ENCODE measurements at regions of chr9 and their contacts with region 1.

Region 1: GRCh38 chr9:136133191-136133958 is 14.7 kb upstream of the TMEM250 start:
- DNase-seq: peak; percentile 93
- H3K4me3 ChIP-seq: peak overlapping the region; percentile 37 to 57
- H3K27ac ChIP-seq: no peak overlapping the region
- H3K4me1 ChIP-seq: peaks cover 4 to 15% of the 10 kb centered on the region in 2 experiments; a peak in 2 of 4 replicates
- H3K27me3 ChIP-seq: peaks cover 74% of the 10 kb centered on the region
- CTCF ChIP-seq: peak; percentile 53
- EP300 ChIP-seq: no peak
- RAD21 ChIP-seq: peak; percentile 63

Region 2: GRCh38 chr9:136267261-136268111 is 134.1 kb after region 1 on chr9:
- CTCF ChIA-PET with region 1: interaction called, 10 read pairs
- POLR2A ChIA-PET with region 1: no interaction called
- DNase-seq: peak; percentile 100
- H3K4me3 ChIP-seq: peak overlapping the region; percentile 50 to 52
- H3K27ac ChIP-seq: peak overlapping the region in 1 of 2 experiments; percentile 76; a peak in 2 of 4 replicates
- H3K4me1 ChIP-seq: peaks cover 0 to 15% of the 10 kb centered on the region in 2 experiments; a peak in 1 of 4 replicates
- H3K27me3 ChIP-seq: peaks cover 5% of the 10 kb centered on the region; the same call in 1 of the 2 replicates
- CTCF ChIP-seq: peak; percentile 28; the same call in 1 of the 2 replicates
- EP300 ChIP-seq: no peak
- RAD21 ChIP-seq: peak; percentile 49

Region 3: GRCh38 chr9:136328622-136329041 is 195.3 kb after region 1 on chr9:
- CTCF ChIA-PET with region 1: no interaction called
- POLR2A ChIA-PET with region 1: no interaction called
- DNase-seq: peak; percentile 72
- H3K4me3 ChIP-seq: peak overlapping the region; percentile 82 to 84
- H3K27ac ChIP-seq: peak overlapping the region; percentile 50 to 89; a peak in 3 of 4 replicates
- H3K4me1 ChIP-seq: peaks cover 24 to 49% of the 10 kb centered on the region in 2 experiments
- H3K27me3 ChIP-seq: no peaks in the 10 kb centered on the region
- CTCF ChIP-seq: no peak
- EP300 ChIP-seq: no peak
- RAD21 ChIP-seq: no peak

Region 4: DNA sequence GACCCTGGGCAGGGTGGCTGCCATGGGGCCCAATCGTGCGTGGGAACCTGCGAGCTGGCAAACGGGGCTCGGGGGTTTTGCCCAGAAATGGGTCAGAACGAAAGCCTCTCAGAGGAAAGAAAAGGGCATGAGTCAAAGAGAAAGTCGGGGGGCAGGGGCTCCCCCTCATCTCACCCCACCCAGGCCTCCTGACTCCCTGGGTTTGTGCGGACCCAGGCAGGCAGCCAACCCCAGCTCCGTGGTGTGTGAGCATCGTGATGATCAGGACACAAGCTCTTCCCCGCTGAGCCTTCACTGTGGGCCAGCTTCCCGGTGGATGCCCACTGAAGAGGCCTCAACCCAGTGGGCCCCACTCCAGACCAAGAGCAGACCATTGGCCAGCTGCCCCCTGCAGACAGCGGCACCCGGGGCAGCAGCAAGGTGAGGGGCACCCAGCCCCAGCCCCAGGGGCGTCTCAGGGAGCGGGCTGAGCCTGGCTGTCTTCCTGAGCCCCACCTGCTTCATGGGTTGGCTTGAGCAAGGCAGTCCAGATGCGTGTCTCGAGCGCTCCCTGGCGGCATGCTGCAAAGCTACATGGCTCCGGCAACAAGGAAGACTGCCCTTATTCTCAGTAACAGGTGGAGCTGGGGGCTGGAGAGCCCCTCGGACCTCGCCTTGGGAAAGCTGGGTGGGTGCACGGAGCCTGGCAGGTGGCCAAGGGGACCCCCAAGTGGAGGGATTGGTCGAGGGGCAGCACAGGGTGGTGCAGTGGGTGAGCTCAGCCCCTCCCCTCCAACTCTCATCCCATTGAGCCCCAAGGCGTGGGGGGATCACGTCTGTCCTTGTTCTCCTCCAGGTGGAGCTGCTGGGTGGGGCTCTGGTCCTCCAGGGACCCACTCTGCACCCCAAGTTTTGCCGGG is 901.7 kb after region 1 on chr9:
- CTCF ChIA-PET with region 1: no interaction called
- POLR2A ChIA-PET with region 1: no interaction called
- DNase-seq: peak; percentile 93
- H3K4me3 ChIP-seq: peak overlapping the region in 1 of 2 experiments; percentile 20; a peak in 1 of 4 replicates
- H3K27ac ChIP-seq: peak overlapping the region in 1 of 2 experiments; percentile 39; a peak in 1 of 4 replicates
- H3K4me1 ChIP-seq: peaks cover 0 to 21% of the 10 kb centered on the region in 2 experiments; a peak in 1 of 4 replicates
- H3K27me3 ChIP-seq: no peaks in the 10 kb centered on the region
- CTCF ChIP-seq: peak; percentile 81
- EP300 ChIP-seq: no peak
- RAD21 ChIP-seq: peak; percentile 85